ENCODE measurements at regions of chr11 and their contacts with region 1.

Region 1: GRCh38 chr11:69939551-69940245 is 120.5 kb upstream of the FGF3 start:
- DNase-seq: peak; percentile 77
- ATAC-seq: peak; percentile 96
- H3K4me3 ChIP-seq: no peak overlapping the region
- H3K27ac ChIP-seq: peak overlapping the region; percentile 56
- H3K4me1 ChIP-seq: peaks cover 8% of the 10 kb centered on the region; the same call in 1 of the 2 replicates
- H3K27me3 ChIP-seq: no peaks in the 10 kb centered on the region
- CTCF ChIP-seq: no peak
- POLR2A ChIP-seq: no peak
- RAD21 ChIP-seq: no peak

Region 2: DNA sequence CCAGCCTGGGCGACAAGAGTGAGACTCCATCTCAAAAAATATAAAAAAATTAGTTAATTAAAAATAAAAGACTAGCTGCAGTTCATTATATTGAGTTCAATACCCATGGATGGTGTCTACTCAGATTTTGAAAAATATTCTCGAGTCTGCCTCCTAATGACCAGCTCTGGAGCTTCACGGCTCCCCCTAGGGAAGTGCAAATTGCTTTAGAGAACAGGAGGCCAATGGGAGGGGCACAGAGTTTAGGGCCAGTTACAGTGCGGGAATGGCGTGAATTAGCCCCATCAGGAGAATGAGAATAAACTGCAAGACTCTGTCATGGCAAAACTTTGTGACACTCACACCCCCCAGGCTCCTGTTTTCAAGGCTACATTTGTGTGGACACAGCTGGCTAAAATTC is 169.2 kb before region 1 on chr11:
- CTCF ChIA-PET with region 1: no interaction called
- POLR2A ChIA-PET with region 1: no interaction called
- dilution Hi-C with region 1: no loop called
- in situ Hi-C with region 1: no loop called
- intact Hi-C with region 1: no loop called
- DNase-seq: no peak
- ATAC-seq: no peak
- H3K4me3 ChIP-seq: no peak overlapping the region
- H3K27ac ChIP-seq: no peak overlapping the region
- H3K4me1 ChIP-seq: no peaks in the 10 kb centered on the region
- H3K27me3 ChIP-seq: peaks cover 78% of the 10 kb centered on the region
- CTCF ChIP-seq: no peak
- POLR2A ChIP-seq: no peak
- RAD21 ChIP-seq: no peak

Region 3: GRCh38 chr11:69918938-69919650 is 20.6 kb before region 1 on chr11:
- CTCF ChIA-PET with region 1: no interaction called
- POLR2A ChIA-PET with region 1: no interaction called
- dilution Hi-C with region 1: no loop called
- in situ Hi-C with region 1: no loop called
- intact Hi-C with region 1: no loop called
- DNase-seq: peak; percentile 57
- ATAC-seq: peak; percentile 68
- H3K4me3 ChIP-seq: no peak overlapping the region
- H3K27ac ChIP-seq: no peak overlapping the region
- H3K4me1 ChIP-seq: peaks cover 7% of the 10 kb centered on the region
- H3K27me3 ChIP-seq: no peaks in the 10 kb centered on the region; the same call in 1 of the 2 replicates
- CTCF ChIP-seq: peak; percentile 92
- POLR2A ChIP-seq: 0 out of 2 replicates have a peak, but pooled peaks have one; percentile 26
- RAD21 ChIP-seq: peak; percentile 88

Region 4: DNA sequence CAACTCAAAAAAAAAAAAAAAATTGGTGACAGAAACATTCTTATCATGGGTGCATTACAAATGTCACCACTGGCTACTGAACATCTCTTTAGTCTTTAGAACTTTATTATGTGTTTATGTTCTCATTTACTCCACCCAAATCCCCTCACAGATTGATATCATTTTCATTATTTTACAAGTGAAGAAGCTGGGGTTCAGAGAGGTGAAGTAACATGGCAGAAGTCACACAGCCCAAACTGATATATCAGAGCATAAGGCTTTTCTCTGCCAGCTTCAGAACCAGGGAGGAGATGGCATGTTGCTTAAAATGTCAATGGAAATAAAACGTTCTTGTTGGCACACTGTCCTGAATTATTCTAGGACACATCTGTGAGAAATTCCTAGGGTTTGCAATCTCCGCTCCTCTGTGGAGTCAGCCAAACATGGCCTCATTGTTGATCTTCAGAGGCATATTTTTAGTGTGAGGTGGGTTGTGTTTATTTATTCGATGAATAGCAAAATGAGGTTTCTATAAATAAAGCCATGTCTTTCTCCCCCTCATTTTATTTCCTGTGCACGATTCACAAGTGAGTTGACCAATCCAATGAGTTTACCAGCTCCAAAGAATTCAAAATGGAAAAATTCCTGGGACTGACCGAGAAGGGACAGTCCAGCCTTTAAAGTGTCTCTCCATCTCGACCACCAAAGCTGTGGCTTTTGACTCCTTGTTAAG is 65.6 kb after region 1 on chr11:
- CTCF ChIA-PET with region 1: no interaction called
- POLR2A ChIA-PET with region 1: no interaction called
- dilution Hi-C with region 1: no loop called
- in situ Hi-C with region 1: no loop called
- intact Hi-C with region 1: no loop called
- DNase-seq: peak; percentile 96
- ATAC-seq: peak; percentile 93
- H3K4me3 ChIP-seq: no peak overlapping the region
- H3K27ac ChIP-seq: peak overlapping the region; percentile 81
- H3K4me1 ChIP-seq: peaks cover 17% of the 10 kb centered on the region
- H3K27me3 ChIP-seq: no peaks in the 10 kb centered on the region
- CTCF ChIP-seq: no peak
- POLR2A ChIP-seq: peak; percentile 48; the same call in 1 of the 2 replicates
- RAD21 ChIP-seq: no peak

Region 5: DNA sequence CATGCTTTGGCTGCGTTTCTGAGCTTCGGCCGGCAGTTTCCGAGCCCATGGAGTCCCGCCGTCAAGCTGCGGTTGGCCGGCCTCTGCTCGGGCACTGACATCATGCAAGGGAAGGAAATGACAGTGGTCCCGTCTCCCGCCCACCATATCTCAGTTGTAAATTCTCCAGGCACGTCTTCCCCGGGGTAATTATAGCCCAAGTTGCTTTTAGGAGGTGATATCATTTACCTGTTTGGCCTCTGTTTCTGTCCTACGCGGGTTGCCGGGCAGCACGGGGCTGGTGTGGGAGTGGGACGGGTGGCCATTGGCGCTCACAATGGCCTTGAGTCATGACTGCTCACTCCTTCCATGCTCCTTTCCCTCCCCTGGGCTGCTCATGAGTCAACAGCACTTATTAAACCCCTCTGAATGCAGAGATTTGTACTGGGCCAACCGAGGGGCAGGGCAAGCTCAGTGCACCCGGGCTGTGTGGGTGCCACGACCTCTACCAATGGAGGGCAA is 134.2 kb after region 1 on chr11:
- CTCF ChIA-PET with region 1: no interaction called
- POLR2A ChIA-PET with region 1: interaction called, 6 read pairs
- dilution Hi-C with region 1: no loop called
- in situ Hi-C with region 1: no loop called
- intact Hi-C with region 1: loop called (anchors 5 kb)
- DNase-seq: peak; percentile 73
- ATAC-seq: no peak
- H3K4me3 ChIP-seq: no peak overlapping the region
- H3K27ac ChIP-seq: no peak overlapping the region
- H3K4me1 ChIP-seq: peaks cover 9% of the 10 kb centered on the region
- H3K27me3 ChIP-seq: no peaks in the 10 kb centered on the region; the same call in 1 of the 2 replicates
- CTCF ChIP-seq: no peak
- POLR2A ChIP-seq: no peak
- RAD21 ChIP-seq: no peak

Measured in IMR-90 (cell line).